ENCODE measurements at regions of chr6 and their contacts with region 1.

Region 1: DNA sequence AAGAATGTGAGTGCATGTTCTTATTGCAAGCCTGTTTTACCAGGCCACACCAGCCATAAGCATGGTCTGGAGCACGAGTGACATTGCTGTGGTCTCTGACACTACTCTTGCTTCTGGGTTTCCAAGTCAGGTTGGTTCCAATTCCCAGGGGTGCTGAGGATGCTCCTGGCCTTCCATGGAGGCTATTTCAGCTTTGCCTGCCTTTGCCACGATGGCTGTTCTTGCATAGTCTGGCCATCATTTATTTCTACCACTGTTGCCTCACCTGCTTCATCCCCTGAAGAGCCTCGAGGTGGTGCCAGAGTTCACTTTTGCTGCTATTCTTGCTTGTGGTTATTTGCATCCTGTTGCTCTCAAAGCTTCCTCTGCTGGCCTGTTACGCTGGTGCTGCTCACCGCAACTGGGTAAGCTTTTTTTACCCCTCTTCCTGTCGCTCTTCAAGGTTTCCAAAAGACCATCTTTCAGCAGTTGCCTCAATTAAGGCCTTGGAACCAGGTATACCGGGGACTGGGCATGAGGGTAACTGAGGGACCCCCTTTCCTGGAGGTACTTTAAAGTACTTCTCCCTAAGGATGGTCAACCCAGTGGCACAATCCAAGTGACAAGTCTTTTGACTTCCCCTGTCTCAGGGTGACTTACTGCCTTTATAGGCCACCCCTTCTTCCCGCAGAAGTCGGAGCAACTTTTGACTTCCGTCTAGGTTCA is 64.5 kb downstream of the AKAP7 start:
- DNase-seq: peak; percentile 84
- H3K4me3 Mint-ChIP-seq: peak overlapping the region; percentile 78
- H3K27ac Mint-ChIP-seq: peak overlapping the region; percentile 96
- H3K4me1 Mint-ChIP-seq: peaks cover 57% of the 10 kb centered on the region
- H3K27me3 Mint-ChIP-seq: no peaks in the 10 kb centered on the region

Region 2: DNA sequence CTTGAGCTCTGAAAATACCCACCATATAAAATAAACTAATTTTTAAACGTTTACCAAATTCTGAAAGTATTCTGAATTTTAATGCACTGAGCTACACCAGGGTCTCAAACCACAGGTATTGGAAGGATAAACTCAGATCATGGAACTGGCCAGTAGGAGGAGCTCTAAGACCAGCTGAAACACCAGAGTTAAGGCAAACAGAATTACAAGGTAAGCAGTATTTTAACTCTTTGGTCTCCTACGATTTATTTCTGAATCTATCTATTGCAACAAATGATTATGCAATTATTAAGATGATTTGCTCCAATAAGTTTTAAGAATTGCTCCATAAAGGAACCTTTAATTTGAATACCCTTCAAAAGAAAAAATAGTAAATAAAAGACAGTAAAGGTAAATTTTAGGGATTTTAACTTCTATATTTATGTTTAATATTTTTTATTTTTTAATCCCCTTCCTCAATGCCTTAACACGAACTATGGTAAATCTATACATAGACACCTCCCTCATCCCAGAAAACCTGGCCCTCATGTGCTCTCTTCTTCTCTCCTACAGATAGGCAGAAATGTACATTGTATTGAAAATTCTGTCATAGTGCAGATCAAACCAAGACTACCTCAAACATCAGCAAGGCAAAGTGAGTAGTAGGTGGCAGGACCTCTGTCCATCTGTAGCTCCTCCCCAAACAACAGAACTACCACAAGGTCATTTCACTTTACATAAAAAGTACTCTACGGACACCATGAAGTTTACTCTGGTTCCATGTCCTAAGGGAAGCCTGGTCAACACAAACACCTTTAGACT is 314.1 kb before region 1 on chr6:
- CTCF ChIA-PET with region 1: interaction called, 3 read pairs
- intact Hi-C with region 1: loop called (anchors 1 kb)
- DNase-seq: peak; percentile 86
- H3K4me3 Mint-ChIP-seq: no peak overlapping the region
- H3K27ac Mint-ChIP-seq: no peak overlapping the region
- H3K4me1 Mint-ChIP-seq: no peaks in the 10 kb centered on the region
- H3K27me3 Mint-ChIP-seq: no peaks in the 10 kb centered on the region

Region 3: DNA sequence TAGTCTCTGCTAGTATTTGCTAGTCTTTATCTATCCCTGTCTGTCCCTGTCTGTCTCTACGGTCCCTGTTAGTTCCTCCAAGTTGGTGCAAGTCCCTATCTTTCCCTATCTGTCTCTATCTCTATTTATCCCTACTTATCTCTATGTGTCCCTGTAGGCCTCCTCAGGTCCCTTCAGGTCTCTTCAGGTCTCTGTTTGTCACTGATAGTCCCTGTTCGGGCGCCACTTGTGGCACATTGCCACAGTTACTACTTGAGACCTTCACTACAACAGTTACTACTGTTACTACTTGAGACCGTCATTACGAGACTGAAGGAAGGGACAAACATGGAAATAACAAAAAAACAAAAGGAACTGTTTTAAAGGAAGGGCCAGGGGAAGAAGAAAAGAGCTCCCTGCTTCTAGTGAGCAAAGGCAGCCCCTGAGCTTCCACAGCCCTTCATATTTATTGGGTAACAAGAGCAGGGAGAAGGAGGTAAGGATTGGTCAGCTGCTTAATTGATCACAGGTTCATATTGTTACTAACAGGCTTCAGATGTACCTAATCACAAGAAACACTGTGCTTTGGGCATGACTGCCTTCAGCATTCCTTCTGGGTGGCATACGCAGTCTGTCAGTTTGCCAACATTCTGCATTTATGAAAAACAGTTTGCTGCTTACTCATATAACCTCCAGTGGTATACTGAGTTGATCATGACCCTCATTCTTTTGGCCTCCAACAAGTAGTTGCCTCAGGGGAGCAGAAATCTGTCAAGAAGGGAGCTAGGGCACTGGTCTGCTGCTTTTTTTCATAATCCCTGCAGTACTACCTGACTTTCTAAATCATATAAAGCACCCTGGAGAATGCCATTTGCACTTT is 145.1 kb before region 1 on chr6:
- CTCF ChIA-PET with region 1: no interaction called
- intact Hi-C with region 1: no loop called
- DNase-seq: no peak
- H3K4me3 Mint-ChIP-seq: no peak overlapping the region
- H3K27ac Mint-ChIP-seq: no peak overlapping the region
- H3K4me1 Mint-ChIP-seq: no peaks in the 10 kb centered on the region
- H3K27me3 Mint-ChIP-seq: no peaks in the 10 kb centered on the region

Region 4: GRCh38 chr6:131135244-131136020 is 64.3 kb before region 1 on chr6 and contains the start of gene AKAP7:
- CTCF ChIA-PET with region 1: interaction called, 3 read pairs
- intact Hi-C with region 1: loop called (anchors 1 kb)
- DNase-seq: peak; percentile 67
- H3K4me3 Mint-ChIP-seq: peak within 1 kb of the TSS; percentile 85
- H3K27ac Mint-ChIP-seq: peak within 1 kb of the TSS; percentile 83
- H3K4me1 Mint-ChIP-seq: peaks cover 13% of the 10 kb centered on the region
- H3K27me3 Mint-ChIP-seq: no peaks in the 10 kb centered on the region
- total RNA-seq, gene AKAP7: 7.3 to 7.5 TPM

Region 5: GRCh38 chr6:131443514-131443913 is 243.8 kb after region 1 on chr6:
- CTCF ChIA-PET with region 1: no interaction called
- intact Hi-C with region 1: loop called (anchors 1 kb)
- DNase-seq: peak; percentile 63
- H3K4me3 Mint-ChIP-seq: peak overlapping the region; percentile 83
- H3K27ac Mint-ChIP-seq: peak overlapping the region; percentile 90
- H3K4me1 Mint-ChIP-seq: peaks cover 58% of the 10 kb centered on the region
- H3K27me3 Mint-ChIP-seq: no peaks in the 10 kb centered on the region

Region 6: GRCh38 chr6:131460614-131461000 is 260.9 kb after region 1 on chr6:
- CTCF ChIA-PET with region 1: no interaction called
- intact Hi-C with region 1: loop called (anchors 1 kb)
- DNase-seq: no peak
- H3K4me3 Mint-ChIP-seq: no peak overlapping the region
- H3K27ac Mint-ChIP-seq: no peak overlapping the region
- H3K4me1 Mint-ChIP-seq: peaks cover 5% of the 10 kb centered on the region
- H3K27me3 Mint-ChIP-seq: no peaks in the 10 kb centered on the region

Region 7: GRCh38 chr6:131909408-131910218 is 709.9 kb after region 1 on chr6:
- CTCF ChIA-PET with region 1: no interaction called
- intact Hi-C with region 1: loop called (anchors 1 kb)
- DNase-seq: peak; percentile 87
- H3K4me3 Mint-ChIP-seq: no peak overlapping the region
- H3K27ac Mint-ChIP-seq: no peak overlapping the region
- H3K4me1 Mint-ChIP-seq: peaks cover 5% of the 10 kb centered on the region
- H3K27me3 Mint-ChIP-seq: peaks cover 11% of the 10 kb centered on the region

Measured in activated naive CD4-positive, alpha-beta T cell treated with anti-CD3 and anti-CD28 coated beads for 36 hours (primary cell).